ENCODE measurements at regions of chr4 and their contacts with region 1.

Region 1: GRCh38 chr4:42519803-42520417 is 122.6 kb downstream of the SHISA3 start:
- DNase-seq: peak in 1 of 2 experiments; percentile 17
- H3K4me3 ChIP-seq: no peak overlapping the region
- H3K27ac ChIP-seq: no peak overlapping the region
- H3K4me1 ChIP-seq: no peaks in the 10 kb centered on the region
- H3K27me3 ChIP-seq: peaks cover 17% of the 10 kb centered on the region
- CTCF ChIP-seq: peak; percentile 76

Region 2: GRCh38 chr4:41692717-41693345 is 827.1 kb before region 1 on chr4:
- CTCF ChIA-PET with region 1: no interaction called
- POLR2A ChIA-PET with region 1: no interaction called
- intact Hi-C with region 1: loop called (anchors 5 kb)
- DNase-seq: peak in 1 of 2 experiments; percentile 34
- H3K4me3 ChIP-seq: no peak overlapping the region
- H3K27ac ChIP-seq: no peak overlapping the region
- H3K4me1 ChIP-seq: no peaks in the 10 kb centered on the region
- H3K27me3 ChIP-seq: no peaks in the 10 kb centered on the region
- CTCF ChIP-seq: peak; percentile 83

Region 3: GRCh38 chr4:42282081-42282901 is 237.6 kb before region 1 on chr4:
- CTCF ChIA-PET with region 1: no interaction called
- POLR2A ChIA-PET with region 1: no interaction called
- intact Hi-C with region 1: loop called (anchors 1 kb)
- DNase-seq: peak in 1 of 2 experiments; percentile 10
- H3K4me3 ChIP-seq: no peak overlapping the region
- H3K27ac ChIP-seq: no peak overlapping the region
- H3K4me1 ChIP-seq: no peaks in the 10 kb centered on the region
- H3K27me3 ChIP-seq: peaks cover 22% of the 10 kb centered on the region
- CTCF ChIP-seq: peak; percentile 71

Region 4: GRCh38 chr4:42371306-42372252 is 148.3 kb before region 1 on chr4:
- CTCF ChIA-PET with region 1: interaction called, 3 read pairs
- POLR2A ChIA-PET with region 1: no interaction called
- intact Hi-C with region 1: loop called (anchors 2 kb)
- DNase-seq: no peak
- H3K4me3 ChIP-seq: no peak overlapping the region
- H3K27ac ChIP-seq: no peak overlapping the region
- H3K4me1 ChIP-seq: no peaks in the 10 kb centered on the region
- H3K27me3 ChIP-seq: peaks cover 7% of the 10 kb centered on the region; the same call in 1 of the 2 replicates
- CTCF ChIP-seq: peak; percentile 56

Measured in PC-9 (cell line).